ENCODE measurements at regions of chr10 and their contacts with region 1.

Region 1: GRCh38 chr10:35412900-35413491 is 76.7 kb downstream of the CCNY start:
- DNase-seq: no peak
- H3K4me3 Mint-ChIP-seq: no peak overlapping the region
- H3K27ac Mint-ChIP-seq: no peak overlapping the region
- H3K4me1 Mint-ChIP-seq: peaks cover 41% of the 10 kb centered on the region
- H3K27me3 Mint-ChIP-seq: no peaks in the 10 kb centered on the region

Region 2: GRCh38 chr10:35341521-35341920 is 71.5 kb before region 1 on chr10:
- CTCF ChIA-PET with region 1: interaction called, 4 read pairs
- intact Hi-C with region 1: loop called (anchors 1 kb)
- DNase-seq: no peak
- H3K4me3 Mint-ChIP-seq: no peak overlapping the region
- H3K27ac Mint-ChIP-seq: peak overlapping the region; percentile 11
- H3K4me1 Mint-ChIP-seq: peaks cover 74% of the 10 kb centered on the region
- H3K27me3 Mint-ChIP-seq: no peaks in the 10 kb centered on the region

Region 3: DNA sequence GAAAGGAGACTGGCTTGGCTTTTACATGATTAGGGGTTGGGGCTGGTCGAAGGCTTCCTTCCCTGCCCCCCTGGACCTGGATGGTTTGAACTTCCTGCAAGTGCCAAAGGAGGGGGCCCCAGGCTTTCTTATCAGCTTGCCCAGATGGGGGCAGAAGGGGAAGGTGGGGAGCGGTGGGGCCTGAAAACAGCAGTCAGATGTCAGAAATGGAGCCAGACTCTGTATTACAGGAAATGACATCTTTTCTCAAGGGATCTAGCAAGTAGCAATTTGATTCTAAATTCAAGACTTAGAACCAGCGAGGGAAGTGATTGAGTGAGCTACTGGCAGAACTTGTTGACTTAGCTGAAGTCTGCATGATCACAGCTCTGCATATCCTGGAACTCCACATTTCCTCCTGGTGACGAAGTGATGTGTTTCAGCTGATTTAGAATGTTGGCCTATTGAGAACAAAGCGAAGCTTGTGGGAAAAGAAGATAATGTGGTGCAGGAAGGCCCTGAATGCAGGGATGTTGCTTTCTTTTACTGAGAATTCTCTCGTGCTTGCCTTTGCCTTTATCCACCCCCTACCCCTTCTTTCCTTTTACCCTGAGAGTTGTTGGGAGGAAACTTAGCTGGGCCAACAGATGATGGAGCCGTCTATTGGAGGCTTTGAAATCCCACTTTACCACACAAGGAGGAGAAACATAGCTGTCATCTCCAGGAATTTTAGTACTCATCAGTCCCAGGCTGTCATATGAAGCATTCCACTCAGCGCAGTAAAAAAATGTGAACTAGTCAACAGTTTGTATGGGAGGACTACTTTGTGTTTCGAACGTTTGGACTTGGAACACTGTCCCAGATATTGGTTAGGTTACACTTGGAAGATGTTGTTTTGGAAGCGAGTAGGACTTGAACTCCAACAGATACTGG is 33.5 kb before region 1 on chr10:
- CTCF ChIA-PET with region 1: no interaction called
- intact Hi-C with region 1: loop called (anchors 1 kb)
- DNase-seq: peak; percentile 59
- H3K4me3 Mint-ChIP-seq: peak overlapping the region; percentile 59
- H3K27ac Mint-ChIP-seq: peak overlapping the region; percentile 84
- H3K4me1 Mint-ChIP-seq: peaks cover 69% of the 10 kb centered on the region
- H3K27me3 Mint-ChIP-seq: no peaks in the 10 kb centered on the region

Region 4: GRCh38 chr10:35433851-35434426 is 20.9 kb after region 1 on chr10:
- CTCF ChIA-PET with region 1: no interaction called
- intact Hi-C with region 1: loop called (anchors 2 kb)
- DNase-seq: no peak
- H3K4me3 Mint-ChIP-seq: no peak overlapping the region
- H3K27ac Mint-ChIP-seq: no peak overlapping the region
- H3K4me1 Mint-ChIP-seq: peaks cover 39% of the 10 kb centered on the region
- H3K27me3 Mint-ChIP-seq: no peaks in the 10 kb centered on the region

Region 5: GRCh38 chr10:35442028-35442427 is 29.0 kb after region 1 on chr10:
- CTCF ChIA-PET with region 1: interaction called, 3 read pairs
- intact Hi-C with region 1: loop called (anchors 1 kb)
- DNase-seq: peak; percentile 36
- H3K4me3 Mint-ChIP-seq: no peak overlapping the region
- H3K27ac Mint-ChIP-seq: peak overlapping the region; percentile 78
- H3K4me1 Mint-ChIP-seq: peaks cover 47% of the 10 kb centered on the region
- H3K27me3 Mint-ChIP-seq: no peaks in the 10 kb centered on the region

Region 6: GRCh38 chr10:35462491-35462934 is 49.5 kb after region 1 on chr10:
- CTCF ChIA-PET with region 1: no interaction called
- intact Hi-C with region 1: loop called (anchors 1 kb)
- DNase-seq: no peak
- H3K4me3 Mint-ChIP-seq: no peak overlapping the region
- H3K27ac Mint-ChIP-seq: no peak overlapping the region
- H3K4me1 Mint-ChIP-seq: peaks cover 57% of the 10 kb centered on the region
- H3K27me3 Mint-ChIP-seq: no peaks in the 10 kb centered on the region